ENCODE measurements at regions of chr9 and their contacts with region 1.

Region 1: GRCh38 chr9:133160742-133161546 is 2.8 kb downstream of the GBGT1 start:
- DNase-seq: peak; percentile 68 to 74
- H3K4me3 ChIP-seq: no peak overlapping the region
- H3K4me3 Mint-ChIP-seq: no peak overlapping the region
- H3K27ac Mint-ChIP-seq: no peak overlapping the region
- H3K4me1 ChIP-seq: no peaks in the 10 kb centered on the region
- H3K4me1 Mint-ChIP-seq: peaks cover 10% of the 10 kb centered on the region
- H3K27me3 ChIP-seq: no peaks in the 10 kb centered on the region
- H3K27me3 Mint-ChIP-seq: peaks cover 4% of the 10 kb centered on the region
- CTCF ChIP-seq: peak; percentile 59 to 74

Region 2: DNA sequence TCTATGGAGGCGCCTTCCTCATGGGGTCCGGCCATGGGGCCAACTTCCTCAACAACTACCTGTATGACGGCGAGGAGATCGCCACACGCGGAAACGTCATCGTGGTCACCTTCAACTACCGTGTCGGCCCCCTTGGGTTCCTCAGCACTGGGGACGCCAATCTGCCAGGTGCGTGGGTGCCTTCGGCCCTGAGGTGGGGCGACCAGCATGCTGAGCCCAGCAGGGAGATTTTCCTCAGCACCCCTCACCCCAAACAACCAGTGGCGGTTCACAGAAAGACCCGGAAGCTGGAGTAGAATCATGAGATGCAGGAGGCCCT is 95.9 kb before region 1 on chr9:
- CTCF ChIA-PET with region 1: interaction called, 13 read pairs
- POLR2A ChIA-PET with region 1: no interaction called
- intact Hi-C with region 1: no loop called
- DNase-seq: no peak
- H3K4me3 ChIP-seq: no peak overlapping the region
- H3K4me3 Mint-ChIP-seq: no peak overlapping the region
- H3K27ac Mint-ChIP-seq: no peak overlapping the region
- H3K4me1 ChIP-seq: peaks cover 9% of the 10 kb centered on the region; the same call in 1 of the 2 replicates
- H3K4me1 Mint-ChIP-seq: peaks cover 7% of the 10 kb centered on the region
- H3K27me3 ChIP-seq: no peaks in the 10 kb centered on the region
- H3K27me3 Mint-ChIP-seq: no peaks in the 10 kb centered on the region
- CTCF ChIP-seq: no peak

Region 3: DNA sequence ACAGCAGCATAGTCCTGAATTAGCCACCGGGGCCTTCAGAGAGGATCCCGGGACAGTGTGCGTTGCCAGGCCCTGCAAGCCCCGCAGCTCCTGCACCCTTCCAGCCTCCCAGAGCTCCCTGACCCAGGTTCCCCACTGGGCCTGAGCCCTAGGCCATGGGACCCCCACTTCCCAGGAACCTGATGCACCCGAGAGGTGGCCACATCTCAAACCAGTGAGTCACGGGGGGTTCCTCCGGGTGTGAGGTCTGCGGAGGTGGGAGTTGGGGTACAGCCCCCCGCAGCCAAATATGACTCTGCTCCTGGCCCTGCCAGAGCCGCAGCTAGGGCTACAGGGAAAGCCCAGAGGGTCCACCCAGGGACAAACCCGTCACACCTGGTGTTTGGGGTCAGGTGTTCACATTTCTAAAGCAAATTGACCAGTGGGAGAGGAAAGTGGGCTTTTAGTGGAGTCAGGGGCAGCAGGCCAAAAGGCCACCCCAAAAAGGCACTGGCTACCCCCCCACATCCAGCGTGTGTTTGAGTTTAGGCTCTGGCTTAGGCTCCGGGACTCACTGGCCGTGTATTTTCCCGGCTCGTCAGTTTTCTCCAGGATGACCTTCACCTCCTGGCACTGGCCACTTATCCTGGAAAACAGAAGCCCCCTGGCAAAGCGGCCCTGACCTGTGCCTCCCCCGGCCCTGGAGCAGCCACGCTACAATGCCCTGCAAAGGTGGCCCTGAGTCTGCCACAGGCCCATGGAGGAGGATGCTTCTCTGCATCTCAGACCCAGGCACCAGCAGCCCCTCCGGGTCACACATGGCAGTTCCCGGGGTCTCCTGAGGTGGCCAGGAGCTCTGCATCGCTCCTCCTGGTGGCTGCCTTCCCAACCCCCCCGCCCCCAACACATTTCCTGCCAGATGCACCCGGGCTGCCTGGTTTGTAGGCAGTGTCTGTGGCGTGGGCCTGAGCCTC is 65.6 kb after region 1 on chr9:
- CTCF ChIA-PET with region 1: no interaction called
- POLR2A ChIA-PET with region 1: no interaction called
- intact Hi-C with region 1: no loop called
- DNase-seq: no peak
- H3K4me3 ChIP-seq: no peak overlapping the region
- H3K4me3 Mint-ChIP-seq: no peak overlapping the region
- H3K27ac Mint-ChIP-seq: no peak overlapping the region
- H3K4me1 ChIP-seq: no peaks in the 10 kb centered on the region
- H3K4me1 Mint-ChIP-seq: no peaks in the 10 kb centered on the region
- H3K27me3 ChIP-seq: no peaks in the 10 kb centered on the region
- H3K27me3 Mint-ChIP-seq: no peaks in the 10 kb centered on the region
- CTCF ChIP-seq: no peak